PC-9 (cell line): ENCODE measurements at regions of chr11 and their contacts with region 1.

Region 1: DNA sequence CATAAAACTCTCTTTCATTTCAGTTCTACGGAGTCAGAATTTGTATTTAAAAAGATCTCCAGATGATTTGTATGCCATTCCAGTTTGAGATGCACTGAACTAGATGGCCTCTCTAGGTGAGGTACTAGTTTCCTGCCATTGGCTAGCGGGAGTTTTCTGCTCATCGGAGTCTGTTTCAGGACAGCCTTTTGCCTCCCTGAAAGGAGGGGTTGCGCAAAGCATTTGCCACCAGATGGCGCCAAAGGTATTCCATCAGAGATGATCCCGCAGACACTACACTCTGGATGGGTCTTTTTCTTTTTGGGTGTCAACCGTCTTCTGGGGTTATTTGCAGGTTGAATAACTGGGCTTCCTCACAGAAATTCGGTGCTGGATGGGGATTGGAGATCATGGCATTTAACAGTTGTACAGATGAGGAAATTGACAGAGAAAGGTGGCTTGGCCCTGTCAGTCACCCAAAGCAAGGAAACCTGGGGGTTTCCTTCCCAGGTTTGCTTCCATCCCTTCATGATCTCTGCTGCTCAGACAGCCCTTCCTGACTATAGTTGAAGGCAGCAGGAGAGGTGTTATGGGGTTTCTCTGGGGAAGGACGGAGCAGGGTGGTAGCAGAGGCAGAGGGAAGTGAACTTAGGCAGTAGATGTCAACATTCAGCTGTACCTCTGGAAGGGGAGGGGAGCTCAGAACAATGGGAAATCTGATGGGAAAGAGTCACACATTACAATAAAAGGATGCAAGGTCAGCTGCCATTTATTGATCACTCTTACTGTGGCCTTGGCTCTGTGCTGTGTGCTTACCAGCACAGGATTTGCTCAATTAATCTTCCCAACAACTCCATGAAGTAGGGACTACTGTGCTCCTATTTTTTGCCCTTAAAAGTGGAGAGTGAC is 81.6 kb downstream of the CCDC81 start:
- DNase-seq: peak; percentile 78
- H3K4me3 ChIP-seq: no peak overlapping the region
- H3K27ac ChIP-seq: no peak overlapping the region
- H3K4me1 ChIP-seq: peaks cover 31% of the 10 kb centered on the region
- H3K27me3 ChIP-seq: no peaks in the 10 kb centered on the region
- CTCF ChIP-seq: peak; percentile 96

Region 2: DNA sequence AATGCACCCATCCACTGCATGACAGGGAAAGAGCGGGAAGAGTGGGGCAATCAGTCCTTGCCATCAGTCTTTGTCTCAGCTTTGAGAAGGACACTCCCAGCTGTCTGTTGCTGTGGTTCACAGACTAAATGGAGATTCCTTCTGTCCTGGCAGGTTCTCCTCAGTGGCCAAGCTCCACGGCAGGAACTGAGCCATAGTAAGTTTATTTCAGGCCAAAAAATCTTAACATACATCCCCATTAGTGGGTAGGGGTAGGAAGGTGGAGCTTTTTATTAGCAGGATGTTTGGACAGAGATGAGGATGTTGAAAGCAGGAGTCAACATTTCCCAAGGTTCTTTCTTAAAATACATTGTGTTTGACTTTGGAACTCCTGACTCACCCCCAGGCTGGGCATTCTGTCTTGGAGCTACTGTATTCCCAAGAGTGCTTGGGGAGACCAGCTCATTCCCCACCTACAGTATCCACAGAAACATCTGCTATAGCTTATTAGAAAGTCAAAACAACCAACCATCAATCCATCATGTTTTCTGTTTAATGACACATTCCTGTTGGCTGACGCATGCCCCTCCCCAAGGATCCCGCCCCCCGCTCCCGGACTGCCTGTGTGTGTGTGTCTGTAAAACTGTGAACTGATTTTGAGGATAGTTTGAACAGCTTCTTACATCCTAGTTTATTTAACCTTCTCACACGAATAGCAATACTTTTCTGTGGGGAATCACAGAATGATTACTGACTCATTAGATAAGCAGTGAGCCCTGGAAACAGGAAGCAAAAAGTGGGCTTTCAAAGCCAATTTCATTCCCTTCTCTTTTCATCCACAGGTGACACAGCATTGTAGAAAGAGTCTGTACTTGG is 27.9 kb after region 1 on chr11:
- CTCF ChIA-PET with region 1: interaction called, 6 read pairs
- POLR2A ChIA-PET with region 1: interaction called, 22 read pairs
- intact Hi-C with region 1: loop called (anchors 1 kb)
- DNase-seq: peak; percentile 87 to 100
- H3K4me3 ChIP-seq: peak overlapping the region; percentile 4; the same call in 1 of the 2 replicates
- H3K27ac ChIP-seq: peak overlapping the region; percentile 97
- H3K4me1 ChIP-seq: peaks cover 50% of the 10 kb centered on the region
- H3K27me3 ChIP-seq: no peaks in the 10 kb centered on the region
- CTCF ChIP-seq: no peak

Region 3: DNA sequence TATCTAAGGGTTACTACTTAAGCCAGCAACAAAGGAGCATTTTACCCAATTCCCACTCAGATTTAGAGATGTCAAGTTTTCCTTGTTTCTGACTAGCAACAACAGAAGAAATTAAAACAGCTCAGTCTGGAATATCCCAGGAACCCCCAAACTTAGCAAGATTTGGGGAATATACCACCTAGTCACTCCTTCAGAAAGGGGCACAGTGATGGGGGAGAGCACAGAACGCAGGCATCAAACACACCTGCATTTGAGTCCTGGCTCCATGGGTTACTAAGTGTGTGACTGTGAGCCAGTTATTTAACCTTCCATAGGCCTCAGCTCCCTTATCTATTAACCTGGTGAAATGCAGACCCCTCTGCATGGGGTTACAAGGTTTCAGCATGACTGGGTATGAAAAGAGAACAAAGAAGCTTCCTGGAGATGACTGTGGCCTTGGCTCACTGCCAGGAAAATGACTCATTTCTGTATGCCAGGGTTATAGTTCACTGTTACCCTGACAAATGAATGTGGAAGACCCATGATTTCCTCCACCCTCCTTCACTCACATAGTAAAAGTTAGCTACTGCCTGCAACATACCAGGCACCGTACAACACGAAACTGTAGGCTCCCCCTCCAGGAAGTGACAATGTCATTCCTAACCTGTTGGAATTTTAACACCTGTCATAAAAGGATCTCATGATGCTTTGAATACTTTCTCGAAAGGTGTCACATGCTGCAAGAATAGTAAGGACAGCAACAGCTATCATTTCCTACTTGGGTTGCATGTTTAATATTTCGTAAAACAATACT is 136.6 kb after region 1 on chr11:
- CTCF ChIA-PET with region 1: interaction called, 3 read pairs
- POLR2A ChIA-PET with region 1: interaction called, 11 read pairs
- intact Hi-C with region 1: loop called (anchors 1 kb)
- DNase-seq: peak; percentile 91 to 100
- H3K4me3 ChIP-seq: no peak overlapping the region
- H3K27ac ChIP-seq: peak overlapping the region; percentile 97
- H3K4me1 ChIP-seq: peaks cover 66% of the 10 kb centered on the region
- H3K27me3 ChIP-seq: no peaks in the 10 kb centered on the region
- CTCF ChIP-seq: no peak

Region 4: DNA sequence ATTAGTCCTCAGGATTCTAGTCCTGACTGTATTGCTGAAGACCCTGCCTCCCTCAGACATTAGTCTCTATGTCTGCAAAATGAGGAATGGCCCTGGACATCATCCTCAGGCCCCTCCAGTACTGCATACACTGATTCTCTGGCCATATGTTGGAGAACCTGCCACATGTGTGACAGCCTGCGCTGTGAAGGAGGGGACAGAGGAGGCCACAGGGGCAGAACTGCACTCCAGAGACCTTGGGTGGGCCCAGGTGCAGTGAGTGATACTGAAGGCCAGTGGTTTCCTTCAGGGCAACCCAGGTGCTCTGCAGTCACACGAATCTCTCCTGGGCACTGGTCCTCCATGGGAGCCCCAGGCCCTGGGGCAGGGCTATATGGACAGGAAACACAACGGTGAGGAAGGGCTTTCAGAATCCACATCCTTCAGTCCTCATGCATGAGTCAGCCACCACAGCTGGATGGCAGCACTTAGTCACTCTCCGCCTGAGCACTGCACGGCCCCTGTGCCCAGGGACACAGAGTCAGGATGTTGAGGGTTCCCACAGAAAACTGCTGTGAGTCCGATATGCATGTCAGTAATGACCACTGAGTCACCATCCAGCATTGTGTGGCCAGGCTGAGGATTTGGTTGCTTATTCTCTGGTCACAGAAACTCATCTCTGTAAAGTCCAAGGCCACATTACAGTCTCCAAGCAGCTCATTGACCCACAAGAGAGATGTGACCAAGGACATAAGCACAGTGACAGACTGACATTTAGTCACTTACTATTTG is 176.4 kb after region 1 on chr11:
- CTCF ChIA-PET with region 1: no interaction called
- POLR2A ChIA-PET with region 1: no interaction called
- intact Hi-C with region 1: loop called (anchors 1 kb)
- DNase-seq: peak; percentile 83 to 96
- H3K4me3 ChIP-seq: no peak overlapping the region
- H3K27ac ChIP-seq: peak overlapping the region; percentile 74
- H3K4me1 ChIP-seq: peaks cover 19% of the 10 kb centered on the region
- H3K27me3 ChIP-seq: no peaks in the 10 kb centered on the region
- CTCF ChIP-seq: peak; percentile 52

Region 5: GRCh38 chr11:86802601-86803051 is 346.3 kb after region 1 on chr11:
- CTCF ChIA-PET with region 1: no interaction called
- POLR2A ChIA-PET with region 1: interaction called, 5 read pairs
- intact Hi-C with region 1: loop called (anchors 1 kb)
- DNase-seq: peak; percentile 46 to 93
- H3K4me3 ChIP-seq: peak overlapping the region; percentile 92
- H3K27ac ChIP-seq: peak overlapping the region; percentile 68
- H3K4me1 ChIP-seq: peaks cover 48% of the 10 kb centered on the region
- H3K27me3 ChIP-seq: no peaks in the 10 kb centered on the region
- CTCF ChIP-seq: peak; percentile 89